A549 (cell line): ENCODE measurements at regions of chr2 and their contacts with region 1.

Region 1: DNA sequence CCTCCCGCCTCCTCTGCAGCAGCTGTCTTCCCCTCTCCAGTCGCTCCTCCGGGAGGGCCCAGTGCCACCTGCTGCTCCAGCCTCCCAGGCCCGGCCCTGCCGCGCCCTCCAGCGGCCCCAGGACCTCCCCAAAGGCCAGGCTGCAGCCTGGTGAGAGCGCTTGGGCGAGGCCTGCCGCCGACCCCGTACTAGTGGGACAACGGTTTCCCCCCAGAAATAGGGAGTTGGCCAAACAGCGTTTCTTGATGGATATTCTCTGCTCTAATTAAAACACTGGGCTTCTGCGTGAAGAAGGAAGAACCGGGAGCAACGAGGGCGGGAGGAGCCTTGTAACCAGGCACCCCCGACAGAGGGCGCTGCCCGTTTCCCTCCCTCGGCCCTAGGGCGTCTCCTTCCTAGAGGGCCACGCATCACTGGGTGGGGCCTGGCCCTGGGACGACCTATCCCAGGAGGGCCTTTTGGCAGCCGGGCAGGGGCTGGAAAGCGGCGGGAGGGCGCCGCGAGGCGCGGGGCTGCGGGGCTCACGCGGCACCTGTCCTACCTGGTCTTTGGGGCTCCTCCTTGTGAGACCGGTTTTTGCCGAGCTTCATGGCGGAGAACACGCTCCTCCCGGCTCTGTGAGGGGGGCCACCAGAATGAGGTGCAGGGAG is 25.4 kb upstream of the OTOF start:
- DNase-seq: peak; percentile 91 to 99
- ATAC-seq: peak; percentile 95 to 99
- H3K4me3 ChIP-seq: peak overlapping the region; percentile 63
- H3K27ac ChIP-seq: peak overlapping the region; percentile 82 to 91
- H3K4me1 ChIP-seq: peaks cover 5% of the 10 kb centered on the region; the same call in 1 of the 3 replicates
- CTCF ChIP-seq: peak; percentile 100
- EP300 ChIP-seq: no peak
- POLR2A ChIP-seq: peak; percentile 91
- RAD21 ChIP-seq: peak; percentile 45 to 84; a peak in 4 of 5 replicates

Region 2: DNA sequence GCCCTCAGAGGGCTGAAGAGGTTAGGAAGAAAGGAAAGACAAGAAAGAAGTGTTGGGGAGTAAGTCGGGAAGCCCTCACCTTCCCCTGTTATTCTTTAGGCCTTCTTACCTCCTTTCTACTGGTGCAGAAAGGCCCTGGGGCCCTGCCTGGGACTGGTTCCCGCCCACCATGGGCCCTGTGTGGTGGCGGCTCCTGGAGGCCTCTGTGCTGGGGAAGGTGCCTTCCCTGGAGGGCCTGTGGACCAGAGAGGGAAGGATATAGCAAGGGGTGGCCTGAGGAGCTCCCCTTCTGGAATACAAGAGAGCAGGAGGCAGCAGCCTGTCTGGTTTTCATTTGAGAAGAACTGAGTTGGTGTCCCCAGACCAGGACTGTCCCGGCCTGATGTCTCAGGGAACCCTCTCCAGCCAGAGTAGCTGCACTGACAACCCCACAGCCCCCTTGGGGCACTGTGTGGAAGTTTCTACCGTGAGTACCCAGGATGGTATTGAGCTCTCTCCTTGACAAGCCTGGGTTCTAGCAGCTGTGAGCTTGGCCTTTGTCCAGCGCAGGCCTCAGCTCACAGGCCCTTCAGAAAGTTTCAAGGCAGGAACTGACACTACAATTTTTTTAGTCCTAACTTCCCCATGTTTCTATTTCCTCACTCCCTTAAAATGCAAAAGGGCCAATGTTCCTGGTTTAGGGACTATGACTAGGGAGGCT is 1414.4 kb before region 1 on chr2:
- CTCF ChIA-PET with region 1: no interaction called
- POLR2A ChIA-PET with region 1: no interaction called
- DNase-seq: no peak
- ATAC-seq: peak; percentile 22 to 61; a peak in 4 of 6 replicates
- H3K4me3 ChIP-seq: no peak overlapping the region
- H3K27ac ChIP-seq: no peak overlapping the region
- H3K4me1 ChIP-seq: no peaks in the 10 kb centered on the region
- CTCF ChIP-seq: no peak
- EP300 ChIP-seq: no peak
- POLR2A ChIP-seq: no peak
- RAD21 ChIP-seq: no peak

Region 3: DNA sequence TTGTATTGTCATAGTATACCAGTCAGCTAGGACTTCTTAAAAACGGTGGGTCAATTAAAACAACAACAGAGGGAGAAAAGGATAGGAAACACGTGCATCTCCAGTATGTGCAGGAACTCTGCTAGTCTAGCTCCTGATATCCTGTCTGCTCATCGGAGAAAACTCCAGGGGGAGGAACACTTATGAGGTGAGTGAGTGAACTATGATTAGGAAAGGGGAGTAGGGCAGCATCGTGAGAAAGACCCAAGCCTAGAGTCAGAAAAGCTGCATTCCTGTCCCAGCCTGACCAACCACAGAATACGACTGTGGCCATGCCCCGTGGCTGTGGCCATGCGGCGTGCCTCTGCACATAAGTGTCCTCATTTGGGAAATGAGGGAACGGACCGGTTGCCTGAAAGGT is 864.2 kb before region 1 on chr2:
- CTCF ChIA-PET with region 1: no interaction called
- POLR2A ChIA-PET with region 1: no interaction called
- DNase-seq: no peak
- ATAC-seq: no peak; a peak in 2 of 6 replicates
- H3K4me3 ChIP-seq: no peak overlapping the region
- H3K27ac ChIP-seq: no peak overlapping the region
- H3K4me1 ChIP-seq: no peaks in the 10 kb centered on the region
- CTCF ChIP-seq: no peak
- EP300 ChIP-seq: no peak
- POLR2A ChIP-seq: no peak
- RAD21 ChIP-seq: no peak

Region 4: GRCh38 chr2:26401739-26402541 is 101.4 kb before region 1 on chr2 and contains the start of gene DRC1:
- CTCF ChIA-PET with region 1: interaction called, 10 read pairs
- POLR2A ChIA-PET with region 1: no interaction called
- DNase-seq: peak; percentile 88 to 98
- ATAC-seq: peak; percentile 93 to 96
- H3K4me3 ChIP-seq: peak within 1 kb of the TSS; percentile 41
- H3K27ac ChIP-seq: peak within 1 kb of the TSS in 1 of 2 experiments; percentile 68; a peak in 4 of 6 replicates
- H3K4me1 ChIP-seq: peaks cover 5% of the 10 kb centered on the region
- CTCF ChIP-seq: no peak
- EP300 ChIP-seq: no peak
- POLR2A ChIP-seq: no peak
- RAD21 ChIP-seq: no peak
- polyA plus RNA-seq, gene DRC1: 0.16 and 0.39 TPM in 2 replicates

Region 5: GRCh38 chr2:26469092-26469710 is 34.2 kb before region 1 on chr2:
- CTCF ChIA-PET with region 1: interaction called, 14 read pairs
- POLR2A ChIA-PET with region 1: no interaction called
- DNase-seq: peak; percentile 65 to 88
- ATAC-seq: peak in 1 of 2 experiments; percentile 65; a peak in 3 of 6 replicates
- H3K4me3 ChIP-seq: no peak overlapping the region
- H3K27ac ChIP-seq: no peak overlapping the region
- H3K4me1 ChIP-seq: peaks cover 9% of the 10 kb centered on the region
- CTCF ChIP-seq: peak; percentile 88
- EP300 ChIP-seq: no peak
- POLR2A ChIP-seq: no peak
- RAD21 ChIP-seq: peak; percentile 81 to 93

Region 6: DNA sequence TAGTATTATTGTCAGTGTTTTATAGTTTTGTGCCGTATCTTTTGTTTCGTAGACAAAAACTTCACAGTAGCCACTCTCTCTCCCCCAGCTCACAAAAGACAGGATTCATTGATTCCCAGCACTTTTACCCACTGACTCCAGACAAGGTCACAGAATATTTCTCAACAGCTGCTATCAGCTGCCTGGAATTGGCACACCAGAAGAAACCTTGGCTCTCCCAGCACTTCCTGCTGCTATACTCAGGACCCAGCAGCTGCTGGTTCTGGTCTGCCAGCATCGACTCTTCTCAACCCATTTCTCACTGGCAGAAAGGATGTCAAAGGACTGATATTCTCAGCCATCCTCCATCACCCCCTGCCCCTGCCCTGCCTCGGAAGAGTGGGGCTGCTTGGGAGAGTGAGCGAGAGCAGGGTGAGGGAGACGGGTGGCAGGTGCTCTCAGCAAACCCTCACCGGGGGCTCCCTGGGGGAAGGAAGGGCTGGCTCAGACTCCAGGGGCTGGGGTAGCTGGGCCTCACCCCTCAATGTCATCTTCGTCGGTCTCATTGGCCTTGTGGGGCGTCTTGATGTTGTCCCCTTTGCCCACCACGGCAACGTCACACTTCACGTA is 19.3 kb before region 1 on chr2:
- CTCF ChIA-PET with region 1: interaction called, 15 read pairs
- POLR2A ChIA-PET with region 1: no interaction called
- DNase-seq: no peak
- ATAC-seq: no peak
- H3K4me3 ChIP-seq: no peak overlapping the region
- H3K27ac ChIP-seq: no peak overlapping the region
- H3K4me1 ChIP-seq: no peaks in the 10 kb centered on the region
- CTCF ChIP-seq: no peak
- EP300 ChIP-seq: no peak
- POLR2A ChIP-seq: no peak
- RAD21 ChIP-seq: no peak

Region 7: GRCh38 chr2:26521054-26521912 is 17.9 kb after region 1 on chr2:
- CTCF ChIA-PET with region 1: interaction called, 167 read pairs
- POLR2A ChIA-PET with region 1: no interaction called
- DNase-seq: peak; percentile 69 to 83
- ATAC-seq: peak; percentile 81 to 92
- H3K4me3 ChIP-seq: no peak overlapping the region
- H3K27ac ChIP-seq: no peak overlapping the region
- H3K4me1 ChIP-seq: no peaks in the 10 kb centered on the region
- CTCF ChIP-seq: peak; percentile 61
- EP300 ChIP-seq: no peak
- POLR2A ChIP-seq: no peak
- RAD21 ChIP-seq: peak; percentile 60 to 68

Region 8: DNA sequence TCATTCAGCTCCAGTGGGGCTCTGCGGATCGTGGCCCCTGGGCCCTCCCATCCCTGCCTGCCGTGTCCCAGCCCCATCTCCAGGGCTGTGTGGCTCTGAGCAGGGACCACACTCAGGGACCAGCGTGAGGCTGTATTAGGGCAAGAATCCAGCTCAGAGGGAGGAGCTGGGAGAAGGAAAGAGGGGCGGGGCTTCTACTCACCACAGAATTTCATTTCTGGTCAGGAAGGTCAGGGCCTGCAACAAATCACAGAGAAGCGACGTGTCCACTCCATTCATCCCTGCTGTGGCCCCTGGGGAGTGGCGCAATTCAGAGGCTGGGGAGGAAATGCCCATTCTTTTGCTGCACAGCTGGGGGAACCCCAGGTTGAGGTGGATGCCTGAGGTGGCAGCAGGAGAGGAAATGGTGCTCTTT is 137.0 kb after region 1 on chr2:
- CTCF ChIA-PET with region 1: no interaction called
- POLR2A ChIA-PET with region 1: no interaction called
- DNase-seq: no peak
- ATAC-seq: peak in 1 of 2 experiments; percentile 60; a peak in 3 of 6 replicates
- H3K4me3 ChIP-seq: no peak overlapping the region
- H3K27ac ChIP-seq: peak overlapping the region in 1 of 2 experiments; percentile 54; a peak in 3 of 6 replicates
- H3K4me1 ChIP-seq: peaks cover 6% of the 10 kb centered on the region; the same call in 2 of the 3 replicates
- CTCF ChIP-seq: no peak
- EP300 ChIP-seq: no peak
- POLR2A ChIP-seq: no peak
- RAD21 ChIP-seq: no peak